ENCODE measurements at regions of chr11 and their contacts with region 1.

Region 1: DNA sequence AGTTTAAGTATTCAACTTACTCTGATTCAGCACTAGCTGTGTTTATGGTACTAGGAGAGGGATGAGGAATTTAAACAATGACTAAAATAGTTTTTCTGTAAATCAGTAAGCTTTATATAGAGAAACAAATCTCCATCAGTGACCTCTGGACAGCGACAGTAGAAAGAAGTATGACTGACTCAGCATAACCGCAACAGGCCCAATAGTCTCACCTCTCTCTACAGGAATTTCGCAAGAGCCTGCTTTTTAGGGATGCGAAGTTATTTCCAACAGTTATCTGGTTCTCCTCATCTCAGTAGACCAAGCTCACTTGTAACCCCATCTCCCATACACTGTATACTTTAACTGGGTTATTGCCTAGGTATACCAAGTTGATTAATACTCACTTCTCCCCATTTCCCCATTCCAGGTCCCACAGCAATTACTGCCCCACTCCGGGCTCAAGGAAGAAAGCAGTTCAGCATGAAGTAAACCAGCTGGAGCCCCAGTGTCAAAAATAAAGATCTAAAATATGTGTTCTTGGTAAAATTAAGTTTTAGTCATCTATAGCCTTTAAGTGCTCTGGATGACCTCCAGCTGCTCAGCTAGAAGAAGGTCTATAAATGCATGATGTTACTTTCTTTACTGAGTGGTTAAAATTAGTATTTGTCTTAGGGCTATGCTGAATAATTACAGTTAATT is 770.7 kb upstream of the CCDC90B start:
- DNase-seq: no peak
- ATAC-seq: no peak
- H3K4me3 ChIP-seq: no peak overlapping the region
- H3K4me3 Mint-ChIP-seq: no peak overlapping the region
- H3K27ac ChIP-seq: no peak overlapping the region
- H3K27ac Mint-ChIP-seq: no peak overlapping the region
- H3K4me1 ChIP-seq: no peaks in the 10 kb centered on the region
- H3K4me1 Mint-ChIP-seq: no peaks in the 10 kb centered on the region
- H3K27me3 ChIP-seq: no peaks in the 10 kb centered on the region
- H3K27me3 Mint-ChIP-seq: no peaks in the 10 kb centered on the region
- CTCF ChIP-seq: no peak

Region 2: DNA sequence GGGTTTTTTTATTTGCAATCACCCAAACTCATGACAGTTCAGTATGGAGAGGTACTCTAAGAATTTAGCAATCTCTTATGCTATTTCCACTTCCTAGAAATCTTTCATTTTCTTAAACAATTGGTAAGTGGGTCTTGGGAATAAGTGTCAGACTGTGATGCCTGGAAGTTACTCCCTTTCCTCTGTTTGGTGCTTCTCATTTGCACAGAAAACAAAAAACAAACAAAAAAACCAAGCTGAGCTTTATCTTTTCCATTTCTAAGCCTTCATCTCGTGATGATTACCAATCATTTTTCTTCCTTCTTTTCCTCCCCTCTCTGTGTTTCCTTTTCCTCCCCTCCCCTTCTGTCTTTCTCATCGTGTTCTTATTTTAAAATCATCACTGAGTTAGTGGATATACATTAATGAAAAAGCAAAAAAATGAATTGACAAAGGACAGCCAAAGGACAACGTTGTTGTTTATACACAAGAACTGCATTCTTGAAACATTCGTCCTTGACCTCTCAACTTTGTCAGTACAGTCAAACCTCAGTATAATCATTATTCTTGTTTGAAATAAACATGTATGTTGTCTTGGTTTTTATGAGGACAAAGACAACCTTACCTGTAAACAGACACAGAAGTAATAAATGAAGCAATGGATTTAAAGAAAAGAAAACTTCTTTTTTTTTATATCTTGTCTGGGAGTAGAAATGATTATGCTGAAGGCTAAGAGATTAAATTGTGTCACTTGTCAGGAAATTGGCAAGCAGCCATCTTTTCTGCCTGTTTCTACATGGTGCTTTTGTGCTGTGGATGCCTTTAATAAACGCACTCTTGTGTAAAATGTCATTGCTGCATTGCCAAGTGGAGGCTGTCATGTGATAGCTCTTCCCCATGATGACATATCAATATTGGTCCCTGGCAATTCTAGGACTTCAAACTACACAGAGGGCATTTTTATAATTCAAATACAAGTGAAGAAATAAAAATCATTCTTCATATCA is 32.5 kb after region 1 on chr11:
- CTCF ChIA-PET with region 1: no interaction called
- POLR2A ChIA-PET with region 1: no interaction called
- intact Hi-C with region 1: loop called (anchors 1 kb)
- DNase-seq: no peak
- ATAC-seq: no peak
- H3K4me3 ChIP-seq: no peak overlapping the region
- H3K4me3 Mint-ChIP-seq: no peak overlapping the region
- H3K27ac ChIP-seq: no peak overlapping the region
- H3K27ac Mint-ChIP-seq: no peak overlapping the region
- H3K4me1 ChIP-seq: no peaks in the 10 kb centered on the region
- H3K4me1 Mint-ChIP-seq: no peaks in the 10 kb centered on the region
- H3K27me3 ChIP-seq: no peaks in the 10 kb centered on the region
- H3K27me3 Mint-ChIP-seq: no peaks in the 10 kb centered on the region
- CTCF ChIP-seq: no peak